RWPE1 (cell line): ENCODE measurements at regions of chr3 and their contacts with region 1.

Region 1: GRCh38 chr3:50616003-50616769 is 765 bp upstream of the MAPKAPK3 start:
- DNase-seq: peak; percentile 79
- H3K27ac ChIP-seq: peak overlapping the region; percentile 84
- CTCF ChIP-seq: peak; percentile 100

Region 2: DNA sequence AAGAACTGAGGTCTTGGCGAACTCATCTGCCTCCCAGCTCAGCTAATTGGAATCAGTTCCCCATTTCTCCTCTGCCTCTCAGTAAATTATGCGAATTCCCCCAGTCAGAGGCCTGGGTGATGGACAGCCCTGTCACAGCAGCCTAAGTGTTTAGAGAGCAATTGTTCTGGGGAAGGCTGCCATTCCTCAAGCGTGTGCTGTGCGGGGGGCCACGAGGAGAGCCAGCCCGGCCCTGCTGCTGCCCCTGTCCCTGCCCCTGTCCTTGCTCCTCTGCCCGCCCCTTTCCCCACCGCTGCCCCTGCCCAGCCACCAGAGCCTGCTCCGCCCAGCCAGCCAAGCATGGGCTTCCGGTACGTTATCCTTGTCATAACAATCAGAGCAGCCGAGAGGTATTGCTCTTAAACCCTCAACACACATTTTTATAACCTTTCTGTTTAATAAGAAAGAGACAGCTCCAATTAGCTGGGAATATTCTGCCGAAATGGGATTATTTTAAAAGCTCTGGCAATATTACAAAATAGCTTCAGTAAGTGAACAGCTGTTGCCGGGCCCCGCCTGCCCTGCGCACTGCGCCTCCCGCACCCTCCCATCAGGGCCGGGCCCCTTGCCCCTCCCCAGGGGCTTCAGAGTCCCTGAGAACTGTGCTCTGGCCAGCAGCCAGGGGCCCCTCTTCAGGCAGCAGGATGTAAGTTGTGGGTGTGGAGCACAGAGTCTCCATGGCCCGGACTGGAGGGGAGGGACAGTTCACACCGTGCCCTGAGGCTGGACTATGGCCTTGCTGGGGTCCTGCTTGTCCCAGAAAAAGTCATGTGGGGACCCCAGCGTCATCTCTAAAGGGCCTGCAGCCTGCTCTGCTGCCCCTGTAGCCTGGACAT is 100.4 kb before region 1 on chr3:
- CTCF ChIA-PET with region 1: no interaction called
- POLR2A ChIA-PET with region 1: no interaction called
- DNase-seq: no peak
- H3K27ac ChIP-seq: no peak overlapping the region
- CTCF ChIP-seq: no peak

Region 3: GRCh38 chr3:50572158-50572557 is 44.0 kb before region 1 on chr3:
- CTCF ChIA-PET with region 1: interaction called, 11 read pairs
- POLR2A ChIA-PET with region 1: no interaction called
- DNase-seq: peak; percentile 35
- H3K27ac ChIP-seq: peak overlapping the region; percentile 35
- CTCF ChIP-seq: peak; percentile 77

Region 4: GRCh38 chr3:50639055-50639494 is 22.9 kb after region 1 on chr3:
- CTCF ChIA-PET with region 1: no interaction called
- POLR2A ChIA-PET with region 1: no interaction called
- DNase-seq: no peak
- H3K27ac ChIP-seq: peak overlapping the region; percentile 19
- CTCF ChIP-seq: no peak

Region 5: DNA sequence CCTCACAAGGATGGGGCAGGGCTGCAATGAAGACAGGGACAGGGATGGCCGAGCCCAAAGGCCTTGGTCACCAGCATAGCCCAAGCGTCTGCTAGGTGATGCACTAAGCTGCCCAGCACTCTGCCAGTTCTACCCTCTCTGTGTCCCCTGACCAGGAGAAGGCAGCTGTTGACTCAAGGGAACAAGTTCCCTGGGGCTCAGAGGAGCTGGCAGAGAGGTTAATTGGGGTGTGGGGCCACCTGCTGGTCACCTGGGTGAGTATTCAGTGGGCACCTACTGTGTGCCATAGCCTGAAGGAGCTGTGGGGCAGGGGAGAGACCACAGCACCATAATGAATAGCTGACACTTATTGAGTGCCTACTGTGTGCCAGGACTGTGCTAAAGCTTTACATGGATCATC is 36.5 kb after region 1 on chr3:
- CTCF ChIA-PET with region 1: interaction called, 16 read pairs
- POLR2A ChIA-PET with region 1: no interaction called
- DNase-seq: peak; percentile 45
- H3K27ac ChIP-seq: no peak overlapping the region
- CTCF ChIP-seq: no peak; the same call in 1 of the 2 replicates

Region 6: GRCh38 chr3:50667536-50667935 is 51.4 kb after region 1 on chr3:
- CTCF ChIA-PET with region 1: no interaction called
- POLR2A ChIA-PET with region 1: no interaction called
- DNase-seq: no peak
- H3K27ac ChIP-seq: no peak overlapping the region
- CTCF ChIP-seq: no peak